CD8-positive, alpha-beta memory T cell (primary cell): ENCODE measurements at regions of chr1 and their contacts with region 1.

Region 1: DNA sequence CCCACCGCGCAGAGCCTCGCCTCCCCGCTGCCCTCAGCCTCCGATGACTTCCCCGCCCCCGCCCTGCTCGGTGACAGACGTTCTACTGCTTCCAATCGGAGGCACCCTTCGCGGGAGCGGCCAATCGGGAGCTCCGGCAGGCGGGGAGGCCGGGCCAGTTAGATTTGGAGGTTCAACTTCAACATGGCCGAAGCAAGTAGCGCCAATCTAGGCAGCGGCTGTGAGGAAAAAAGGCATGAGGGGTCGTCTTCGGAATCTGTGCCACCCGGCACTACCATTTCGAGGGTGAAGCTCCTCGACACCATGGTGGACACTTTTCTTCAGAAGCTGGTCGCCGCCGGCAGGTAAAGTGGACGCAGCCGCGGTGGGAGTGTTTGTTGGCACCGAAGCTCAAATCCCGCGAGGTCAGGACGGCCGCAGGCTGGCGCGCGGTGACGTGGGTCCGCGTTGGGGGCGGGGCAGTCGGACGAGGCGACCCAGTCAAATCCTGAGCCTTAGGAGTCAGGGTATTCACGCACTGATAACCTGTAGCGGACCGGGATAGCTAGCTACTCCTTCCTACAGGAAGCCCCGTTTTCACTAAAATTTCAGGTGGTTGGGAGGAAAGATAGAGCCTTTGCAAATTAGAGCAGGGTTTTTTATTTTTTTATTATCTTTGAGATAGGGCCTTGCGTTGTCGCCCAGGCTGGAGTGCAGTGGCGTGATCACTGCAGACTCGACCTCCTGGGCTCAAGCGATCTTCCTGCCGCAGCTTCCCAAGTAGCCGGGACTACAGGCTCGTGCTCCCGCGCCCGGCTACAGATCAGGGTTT is at the start of gene PMF1:
- DNase-seq: peak; percentile 93 to 97 (median 94)
- H3K4me3 ChIP-seq: peak within 1 kb of the TSS; percentile 78
- H3K4me3 Mint-ChIP-seq: peak within 1 kb of the TSS; percentile 90 to 99 (median 97)
- H3K27ac ChIP-seq: peak within 1 kb of the TSS; percentile 93
- H3K27ac Mint-ChIP-seq: peak within 1 kb of the TSS; percentile 98 to 100 (median 99)
- H3K4me1 ChIP-seq: peaks cover 33% of the 10 kb centered on the region
- H3K4me1 Mint-ChIP-seq: peaks cover 31 to 47% (median 43%) of the 10 kb centered on the region in 3 donors
- H3K27me3 ChIP-seq: no peaks in the 10 kb centered on the region
- H3K27me3 Mint-ChIP-seq: no peaks in the 10 kb centered on the region
- total RNA-seq, gene PMF1: 85.9 to 88.3 TPM

Region 2: GRCh38 chr1:156146020-156146768 is 66.8 kb before region 1 on chr1:
- CTCF ChIA-PET with region 1: interaction called, 11 read pairs
- POLR2A ChIA-PET with region 1: interaction called, 8 read pairs
- DNase-seq: peak in 3 of 5 donors; percentile 56 to 70 (median 65)
- H3K4me3 ChIP-seq: peak overlapping the region; percentile 44
- H3K4me3 Mint-ChIP-seq: peak overlapping the region in 6 of 7 donors; percentile 0 to 77 (median 66)
- H3K27ac ChIP-seq: no peak overlapping the region
- H3K27ac Mint-ChIP-seq: peak overlapping the region in 6 of 8 donors; percentile 24 to 91 (median 80)
- H3K4me1 ChIP-seq: peaks cover 8% of the 10 kb centered on the region
- H3K4me1 Mint-ChIP-seq: peaks cover 14 to 20% (median 18%) of the 10 kb centered on the region in 3 donors
- H3K27me3 ChIP-seq: no peaks in the 10 kb centered on the region
- H3K27me3 Mint-ChIP-seq: peaks cover 0 to 9% of the 10 kb centered on the region in 2 donors

Region 3: GRCh38 chr1:156193488-156194299 is 19.3 kb before region 1 on chr1 and contains the start of gene SLC25A44:
- CTCF ChIA-PET with region 1: interaction called, 16 read pairs
- POLR2A ChIA-PET with region 1: interaction called, 34 read pairs
- DNase-seq: peak; percentile 95 to 98 (median 97)
- H3K4me3 ChIP-seq: peak within 1 kb of the TSS; percentile 84
- H3K4me3 Mint-ChIP-seq: peak within 1 kb of the TSS; percentile 90 to 97 (median 95)
- H3K27ac ChIP-seq: peak within 1 kb of the TSS; percentile 78
- H3K27ac Mint-ChIP-seq: peak within 1 kb of the TSS; percentile 88 to 97 (median 93)
- H3K4me1 ChIP-seq: peaks cover 31% of the 10 kb centered on the region
- H3K4me1 Mint-ChIP-seq: peaks cover 43 to 52% (median 46%) of the 10 kb centered on the region in 3 donors
- H3K27me3 ChIP-seq: no peaks in the 10 kb centered on the region
- H3K27me3 Mint-ChIP-seq: no peaks in the 10 kb centered on the region
- total RNA-seq, gene SLC25A44: 30.8 to 32.4 TPM

Region 4: GRCh38 chr1:156282479-156283222 is 69.6 kb after region 1 on chr1 and contains the start of gene SMG5:
- CTCF ChIA-PET with region 1: no interaction called
- POLR2A ChIA-PET with region 1: interaction called, 25 read pairs
- DNase-seq: peak; percentile 94 to 98 (median 96)
- H3K4me3 ChIP-seq: peak within 1 kb of the TSS; percentile 92
- H3K4me3 Mint-ChIP-seq: peak within 1 kb of the TSS; percentile 91 to 97 (median 95)
- H3K27ac ChIP-seq: peak within 1 kb of the TSS; percentile 74
- H3K27ac Mint-ChIP-seq: peak within 1 kb of the TSS; percentile 89 to 97 (median 94)
- H3K4me1 ChIP-seq: peaks cover 29% of the 10 kb centered on the region
- H3K4me1 Mint-ChIP-seq: peaks cover 42 to 51% (median 44%) of the 10 kb centered on the region in 3 donors
- H3K27me3 ChIP-seq: no peaks in the 10 kb centered on the region
- H3K27me3 Mint-ChIP-seq: no peaks in the 10 kb centered on the region
- total RNA-seq, gene SMG5: 110 to 117 TPM